Aorta (tissue), 5 donors: ENCODE measurements at regions of chr17 and their contacts with region 1.

Region 1: DNA sequence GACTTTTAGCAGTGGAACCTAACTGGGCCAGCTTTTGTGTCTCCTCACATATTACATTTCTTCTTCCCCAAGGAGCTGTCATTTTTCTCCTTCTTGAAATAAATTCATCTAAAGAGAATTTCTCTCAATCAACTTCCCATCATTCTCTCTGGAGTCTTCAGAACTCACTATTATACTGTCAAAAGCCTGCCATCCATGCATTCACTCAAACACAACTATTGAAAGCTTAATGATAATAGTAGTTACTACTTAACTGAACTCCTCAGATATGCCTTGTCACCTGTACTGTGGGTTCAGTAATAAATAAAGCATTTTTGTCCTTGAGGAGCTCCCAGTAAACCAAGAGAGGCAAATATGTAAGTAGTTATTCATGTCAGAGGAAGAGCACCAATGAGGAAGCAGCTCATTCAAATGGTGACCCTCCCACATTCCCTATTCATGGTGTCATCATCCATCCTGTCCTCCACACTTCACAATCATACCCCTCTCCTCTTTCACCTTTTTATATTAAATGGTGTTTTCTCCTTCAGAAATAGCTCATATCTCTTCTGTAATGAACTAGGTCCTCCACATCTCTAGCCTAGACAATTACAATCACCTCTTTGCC is 162.6 kb downstream of the CA10 start:
- DNase-seq: no peak
- ATAC-seq: no peak
- H3K4me3 ChIP-seq: no peak overlapping the region
- H3K27ac ChIP-seq: no peak overlapping the region
- H3K4me1 ChIP-seq: no peaks in the 10 kb centered on the region
- H3K27me3 ChIP-seq: no peaks in the 10 kb centered on the region

Region 2: GRCh38 chr17:52048137-52048898 is 52.4 kb after region 1 on chr17:
- intact Hi-C with region 1: loop called in 1 of 2 experiments (anchors 10 kb)
- DNase-seq: no peak
- ATAC-seq: no peak
- H3K4me3 ChIP-seq: no peak overlapping the region
- H3K27ac ChIP-seq: no peak overlapping the region
- H3K4me1 ChIP-seq: no peaks in the 10 kb centered on the region
- H3K27me3 ChIP-seq: no peaks in the 10 kb centered on the region